ENCODE measurements at regions of chr5 and their contacts with region 1.

Region 1: DNA sequence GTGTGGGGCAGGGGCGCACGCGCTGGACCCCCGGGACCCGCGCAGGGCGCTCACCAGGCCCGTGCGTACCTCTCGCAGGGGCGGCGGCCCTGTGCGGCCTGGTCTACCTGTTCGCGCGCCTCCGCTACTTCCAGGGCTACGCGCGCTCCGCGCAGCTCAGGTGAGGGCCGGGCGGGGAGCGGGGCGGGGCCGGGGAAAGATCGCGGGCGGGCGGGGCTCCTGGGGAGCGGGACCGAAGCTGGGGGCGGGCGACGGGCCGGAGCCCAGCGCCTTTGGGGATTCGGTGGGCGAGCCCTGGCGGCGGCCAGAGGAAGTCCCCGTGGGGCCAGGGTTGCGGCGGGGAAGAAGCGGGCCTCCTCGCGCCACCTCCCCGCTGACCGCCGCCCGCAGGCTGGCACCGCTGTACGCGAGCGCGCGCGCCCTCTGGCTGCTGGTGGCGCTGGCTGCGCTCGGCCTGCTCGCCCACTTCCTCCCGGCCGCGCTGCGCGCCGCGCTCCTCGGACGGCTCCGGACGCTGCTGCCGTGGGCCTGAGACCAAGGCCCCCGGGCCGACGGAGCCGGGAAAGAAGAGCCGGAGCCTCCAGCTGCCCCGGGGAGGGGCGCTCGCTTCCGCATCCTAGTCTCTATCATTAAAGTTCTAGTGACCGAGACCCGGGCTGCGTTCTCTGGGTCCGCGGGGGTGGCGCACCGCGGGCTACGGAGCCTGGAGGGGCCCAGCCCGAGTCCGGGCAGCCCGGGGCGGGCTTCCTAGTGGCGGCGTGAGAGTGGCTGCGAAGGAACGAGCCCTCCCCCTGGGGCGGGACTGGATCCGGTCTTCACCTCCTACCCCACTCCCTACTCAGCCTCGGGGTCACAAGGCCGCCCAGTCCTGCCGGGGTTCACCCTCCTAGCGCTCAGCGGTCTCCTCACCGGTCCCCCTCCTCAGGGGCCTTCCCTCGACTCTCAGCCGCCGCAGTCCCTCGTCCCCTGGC is 2.4 kb downstream of the LTC4S start:
- DNase-seq: peak; percentile 44 to 76 (median 60)
- ATAC-seq: peak; percentile 62 to 68
- H3K4me3 Mint-ChIP-seq: peak overlapping the region; percentile 62 to 82 (median 67)
- H3K27ac Mint-ChIP-seq: peak overlapping the region in 5 of 10 donors; percentile 8 to 68 (median 29)
- H3K4me1 Mint-ChIP-seq: peaks cover 18 to 37% (median 32%) of the 10 kb centered on the region in 4 donors
- H3K27me3 Mint-ChIP-seq: no peaks in the 10 kb centered on the region

Region 2: GRCh38 chr5:179763215-179763945 is 32.8 kb before region 1 on chr5:
- POLR2A ChIA-PET with region 1: interaction called, 14 read pairs
- DNase-seq: peak; percentile 20 to 76 (median 52)
- ATAC-seq: peak; percentile 63 to 81
- H3K4me3 Mint-ChIP-seq: peak overlapping the region in 2 of 10 donors; percentile 24 to 36
- H3K27ac Mint-ChIP-seq: peak overlapping the region in 5 of 10 donors; percentile 2 to 88 (median 28)
- H3K4me1 Mint-ChIP-seq: peaks cover 33 to 73% (median 60%) of the 10 kb centered on the region in 4 donors
- H3K27me3 Mint-ChIP-seq: no peaks in the 10 kb centered on the region

Region 3: DNA sequence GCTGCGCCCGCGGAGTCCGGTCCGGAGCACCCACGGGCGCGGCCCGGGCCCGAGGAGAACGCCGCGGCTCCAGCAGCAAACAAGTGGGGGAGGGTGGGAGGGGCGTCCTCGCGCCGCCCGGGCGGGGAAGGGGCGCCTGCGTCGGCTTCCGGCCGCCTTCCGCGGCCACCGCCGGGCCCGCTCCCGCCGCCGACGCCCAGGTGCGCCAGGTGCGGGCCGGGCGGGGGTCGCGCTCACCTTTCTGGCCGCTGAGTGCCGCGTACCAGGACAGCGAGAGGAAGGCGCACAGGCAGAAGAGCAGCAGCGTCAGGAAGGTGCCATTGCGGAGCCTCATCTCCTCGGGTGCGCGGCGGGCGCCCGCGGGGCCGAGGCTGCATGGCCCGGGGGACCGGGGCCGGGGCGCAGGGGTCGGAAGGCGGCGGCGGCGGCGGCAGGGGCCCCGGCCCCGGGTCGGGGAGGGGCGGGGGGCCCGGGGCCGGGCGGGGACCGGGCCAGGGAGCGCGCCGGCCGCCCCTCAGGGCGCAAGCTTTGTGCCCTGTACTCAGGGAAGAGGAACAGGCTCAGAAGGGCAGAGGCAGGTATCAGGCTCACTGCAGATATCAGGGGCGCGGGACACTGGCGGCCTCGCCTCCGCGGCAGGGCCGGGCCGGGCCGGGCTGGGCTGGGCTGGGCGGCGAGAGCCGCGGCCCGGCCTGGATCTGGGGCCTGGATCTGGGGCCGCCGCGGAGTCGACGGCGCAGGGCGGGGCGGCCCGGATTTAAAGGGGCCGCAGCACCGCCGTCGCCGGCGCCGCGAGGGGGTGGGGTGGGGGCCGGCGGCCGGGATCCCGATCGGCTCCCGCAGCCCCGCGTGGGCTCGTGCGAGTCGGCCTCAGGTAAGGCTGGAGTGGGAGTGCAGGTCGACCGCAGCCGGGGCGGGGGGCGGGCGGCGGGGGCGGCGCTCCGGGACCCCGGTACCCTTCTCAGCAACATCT is 10.4 kb after region 1 on chr5 and contains the start of gene MGAT4B:
- POLR2A ChIA-PET with region 1: interaction called, 12 read pairs
- DNase-seq: peak in 7 of 10 donors; percentile 41 to 61 (median 54)
- ATAC-seq: peak; percentile 73 to 74
- H3K4me3 Mint-ChIP-seq: peak within 1 kb of the TSS; percentile 62 to 88 (median 78)
- H3K27ac Mint-ChIP-seq: peak within 1 kb of the TSS in 5 of 10 donors; percentile 15 to 78 (median 65)
- H3K4me1 Mint-ChIP-seq: peaks cover 22 to 40% (median 36%) of the 10 kb centered on the region in 4 donors
- H3K27me3 Mint-ChIP-seq: peaks cover 0 to 3% (median 0%) of the 10 kb centered on the region in 5 donors
- polyA plus RNA-seq, gene MGAT4B: 7.8 to 20.9 (median 13.5) TPM

Region 4: DNA sequence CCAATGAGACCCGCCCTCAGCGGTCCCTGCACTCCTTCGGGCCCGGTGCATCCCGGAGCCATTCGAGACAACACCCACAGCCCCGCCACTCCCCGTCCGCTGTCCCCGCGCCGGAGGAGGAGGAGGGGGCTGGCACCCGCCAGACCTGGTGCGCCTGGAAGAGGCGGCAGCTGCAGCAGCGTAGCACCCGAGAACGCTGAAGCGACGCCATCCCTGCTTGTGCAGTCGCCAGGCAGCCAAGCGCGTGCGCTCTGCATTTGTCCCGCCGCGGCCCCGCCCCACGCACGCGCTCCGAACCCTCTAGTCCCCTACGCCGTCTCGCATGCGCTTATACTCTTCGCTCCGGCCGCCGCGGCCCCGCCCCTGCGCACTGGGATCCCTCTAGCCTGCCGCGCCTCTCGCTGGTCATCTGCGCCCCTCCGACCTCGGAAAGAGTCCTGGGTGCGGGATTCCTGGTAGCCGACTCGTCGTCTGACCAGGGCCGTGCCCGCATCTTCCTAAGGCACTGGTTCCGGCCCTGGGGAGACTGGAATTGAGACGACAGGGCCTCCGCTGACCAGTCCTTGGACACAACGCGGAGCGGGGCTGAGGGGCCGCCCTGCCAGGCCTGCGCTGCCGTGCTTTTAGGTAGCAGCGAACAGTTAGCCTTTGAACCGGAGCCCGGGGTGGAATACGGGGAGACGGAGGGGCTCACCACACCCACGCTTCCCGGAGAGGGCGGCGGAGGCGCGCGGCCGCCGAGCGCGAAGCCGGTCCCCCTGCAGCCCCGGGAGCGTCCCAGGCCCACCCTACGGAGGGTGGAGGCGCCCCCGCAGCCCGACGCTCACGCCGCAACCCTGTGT is 62.7 kb after region 1 on chr5 and contains the start of gene MRNIP:
- POLR2A ChIA-PET with region 1: no interaction called
- DNase-seq: peak; percentile 80 to 90 (median 84)
- ATAC-seq: peak; percentile 93 to 95
- H3K4me3 Mint-ChIP-seq: peak within 1 kb of the TSS; percentile 88 to 99 (median 98)
- H3K27ac Mint-ChIP-seq: peak within 1 kb of the TSS; percentile 77 to 97 (median 95)
- H3K4me1 Mint-ChIP-seq: peaks cover 9 to 34% (median 23%) of the 10 kb centered on the region in 4 donors
- H3K27me3 Mint-ChIP-seq: no peaks in the 10 kb centered on the region
- polyA plus RNA-seq, gene MRNIP: 13.6 to 18.5 (median 15.5) TPM

Measured in naive thymus-derived CD8-positive, alpha-beta T cell (primary cell).